CD4-positive, alpha-beta T cell (primary cell): ENCODE measurements at regions of chr1 and their contacts with region 1.

Region 1: GRCh38 chr1:183915625-183916510 is 110.9 kb downstream of the RGL1 start:
- DNase-seq: peak; percentile 43 to 90 (median 60)
- ATAC-seq: peak; percentile 94
- H3K4me3 ChIP-seq: no peak overlapping the region
- H3K4me3 Mint-ChIP-seq: no peak overlapping the region
- H3K27ac ChIP-seq: no peak overlapping the region
- H3K27ac Mint-ChIP-seq: no peak overlapping the region
- H3K4me1 ChIP-seq: peaks cover 9% of the 10 kb centered on the region
- H3K4me1 Mint-ChIP-seq: peaks cover 11% of the 10 kb centered on the region
- H3K27me3 ChIP-seq: no peaks in the 10 kb centered on the region
- H3K27me3 Mint-ChIP-seq: no peaks in the 10 kb centered on the region
- CTCF ChIP-seq: peak; percentile 85

Region 2: GRCh38 chr1:183281553-183282091 is 634.2 kb before region 1 on chr1:
- CTCF ChIA-PET with region 1: no interaction called
- POLR2A ChIA-PET with region 1: no interaction called
- intact Hi-C with region 1: loop called in 1 of 2 experiments (anchors 5 kb)
- DNase-seq: peak; percentile 41 to 76 (median 58)
- ATAC-seq: peak; percentile 71
- H3K4me3 ChIP-seq: no peak overlapping the region
- H3K4me3 Mint-ChIP-seq: no peak overlapping the region
- H3K27ac ChIP-seq: no peak overlapping the region
- H3K27ac Mint-ChIP-seq: no peak overlapping the region
- H3K4me1 ChIP-seq: peaks cover 5% of the 10 kb centered on the region
- H3K4me1 Mint-ChIP-seq: no peaks in the 10 kb centered on the region
- H3K27me3 ChIP-seq: no peaks in the 10 kb centered on the region
- H3K27me3 Mint-ChIP-seq: peaks cover 16% of the 10 kb centered on the region
- CTCF ChIP-seq: peak; percentile 80

Region 3: DNA sequence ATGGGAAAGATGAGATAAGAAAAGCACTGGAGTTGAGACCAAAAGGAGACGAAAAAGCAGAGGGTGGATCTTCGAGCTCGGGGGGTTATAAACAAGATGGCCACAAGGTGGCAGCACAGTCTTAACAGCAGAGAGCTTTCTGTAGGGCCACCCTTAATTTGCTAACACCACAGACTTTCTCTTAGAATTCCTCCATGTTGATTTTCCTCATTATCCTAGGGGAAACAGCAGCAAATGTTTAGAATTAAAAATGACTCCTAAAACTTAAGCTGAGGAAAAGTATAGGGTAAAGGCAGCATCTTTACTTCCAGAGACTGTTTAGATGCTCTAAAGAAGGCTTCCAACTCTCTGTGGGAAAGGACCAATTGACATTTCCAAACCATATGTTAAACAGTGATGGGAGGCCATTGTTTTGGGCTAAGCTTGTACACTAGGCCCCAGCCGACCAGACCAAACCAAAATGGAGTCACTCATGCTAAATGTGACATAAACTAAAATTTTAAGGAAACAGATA is 260.2 kb before region 1 on chr1:
- CTCF ChIA-PET with region 1: interaction called, 57 read pairs
- POLR2A ChIA-PET with region 1: interaction called, 15 read pairs
- intact Hi-C with region 1: loop called (anchors 1 kb)
- DNase-seq: peak; percentile 50 to 87 (median 70)
- ATAC-seq: peak; percentile 70
- H3K4me3 ChIP-seq: no peak overlapping the region
- H3K4me3 Mint-ChIP-seq: no peak overlapping the region
- H3K27ac ChIP-seq: no peak overlapping the region
- H3K27ac Mint-ChIP-seq: no peak overlapping the region
- H3K4me1 ChIP-seq: peaks cover 28% of the 10 kb centered on the region
- H3K4me1 Mint-ChIP-seq: peaks cover 40% of the 10 kb centered on the region
- H3K27me3 ChIP-seq: no peaks in the 10 kb centered on the region
- H3K27me3 Mint-ChIP-seq: no peaks in the 10 kb centered on the region
- CTCF ChIP-seq: peak; percentile 85

Region 4: DNA sequence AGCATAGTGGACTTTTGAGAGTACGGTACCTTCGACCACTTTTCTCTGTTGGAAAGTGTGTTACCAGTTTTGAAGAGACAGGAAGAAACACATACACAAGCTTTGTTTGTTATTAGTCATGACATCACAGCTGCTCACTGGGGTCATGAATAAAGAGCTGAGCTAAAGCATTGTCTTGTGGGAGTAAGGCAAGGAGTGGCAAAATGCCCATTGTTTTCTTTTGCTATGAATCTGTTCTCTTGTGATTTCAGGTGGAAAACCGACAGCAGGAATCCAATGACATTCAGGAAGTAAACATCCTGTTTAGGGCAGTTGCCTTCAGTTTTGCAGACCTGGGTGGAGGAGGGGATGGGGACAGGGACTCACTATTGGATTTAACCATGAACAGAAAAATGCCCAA is 44.7 kb before region 1 on chr1:
- CTCF ChIA-PET with region 1: no interaction called
- POLR2A ChIA-PET with region 1: no interaction called
- intact Hi-C with region 1: no loop called
- DNase-seq: no peak
- ATAC-seq: no peak
- H3K4me3 ChIP-seq: no peak overlapping the region
- H3K4me3 Mint-ChIP-seq: no peak overlapping the region
- H3K27ac ChIP-seq: no peak overlapping the region
- H3K27ac Mint-ChIP-seq: no peak overlapping the region
- H3K4me1 ChIP-seq: peaks cover 3% of the 10 kb centered on the region
- H3K4me1 Mint-ChIP-seq: peaks cover 22% of the 10 kb centered on the region
- H3K27me3 ChIP-seq: no peaks in the 10 kb centered on the region
- H3K27me3 Mint-ChIP-seq: no peaks in the 10 kb centered on the region
- CTCF ChIP-seq: no peak

Region 5: DNA sequence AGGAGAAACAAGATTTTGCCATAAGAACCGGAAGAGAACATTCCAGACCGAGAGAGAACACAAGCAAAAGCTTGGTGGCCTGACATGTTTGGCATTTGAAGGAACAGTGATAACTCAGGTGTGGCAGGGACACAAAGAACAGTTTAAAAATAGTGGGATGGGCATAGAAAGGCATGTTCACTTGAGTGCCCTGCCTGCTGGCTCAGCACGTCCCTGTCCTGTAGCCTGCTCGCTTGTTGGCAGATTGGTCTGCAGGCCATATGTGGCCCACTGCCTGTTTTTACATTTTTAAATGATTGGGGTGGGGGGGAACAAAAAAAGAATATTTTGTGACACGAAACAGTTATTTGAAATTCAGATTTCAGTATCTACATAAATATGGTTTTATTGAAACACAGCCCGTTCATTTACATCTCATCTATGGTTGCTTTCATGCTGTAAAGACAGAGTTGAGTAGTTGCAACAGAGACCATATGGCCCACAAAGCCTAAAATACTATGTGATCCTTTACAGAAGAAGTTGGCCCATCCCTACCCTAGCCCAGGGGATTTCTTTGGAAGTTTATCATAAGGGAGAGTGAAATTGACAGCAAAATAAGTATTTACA is 10.3 kb before region 1 on chr1:
- CTCF ChIA-PET with region 1: interaction called, 11 read pairs
- POLR2A ChIA-PET with region 1: no interaction called
- intact Hi-C with region 1: no loop called
- DNase-seq: no peak
- ATAC-seq: no peak
- H3K4me3 ChIP-seq: no peak overlapping the region
- H3K4me3 Mint-ChIP-seq: no peak overlapping the region
- H3K27ac ChIP-seq: no peak overlapping the region
- H3K27ac Mint-ChIP-seq: no peak overlapping the region
- H3K4me1 ChIP-seq: no peaks in the 10 kb centered on the region
- H3K4me1 Mint-ChIP-seq: no peaks in the 10 kb centered on the region
- H3K27me3 ChIP-seq: no peaks in the 10 kb centered on the region
- H3K27me3 Mint-ChIP-seq: no peaks in the 10 kb centered on the region
- CTCF ChIP-seq: no peak

Region 6: DNA sequence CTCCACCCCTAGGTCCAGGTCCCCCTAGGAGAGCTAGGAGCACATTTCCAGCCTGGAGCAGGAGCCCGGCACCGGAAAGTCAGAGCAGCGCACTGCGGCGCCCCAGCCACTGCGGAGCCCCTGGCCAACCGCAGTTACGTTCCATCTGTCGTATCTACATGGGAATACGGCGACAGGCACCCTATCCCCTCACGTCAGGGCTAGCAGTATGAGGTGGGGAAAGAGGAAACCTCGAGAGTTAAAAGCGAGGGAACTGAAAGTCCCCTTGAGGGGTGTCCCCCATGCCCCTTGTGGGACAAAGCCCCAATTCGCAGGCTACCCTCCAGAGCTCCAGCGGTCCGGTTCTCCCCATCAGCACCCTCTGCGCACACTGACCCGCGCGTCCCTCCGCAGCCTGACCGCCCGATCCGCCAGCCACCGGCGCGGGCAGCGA is 120.7 kb after region 1 on chr1:
- CTCF ChIA-PET with region 1: no interaction called
- POLR2A ChIA-PET with region 1: no interaction called
- intact Hi-C with region 1: no loop called
- DNase-seq: peak in 6 of 14 experiments; percentile 0 to 44 (median 18)
- ATAC-seq: peak; percentile 25
- H3K4me3 ChIP-seq: peak overlapping the region; percentile 56
- H3K4me3 Mint-ChIP-seq: peak overlapping the region; percentile 79
- H3K27ac ChIP-seq: no peak overlapping the region
- H3K27ac Mint-ChIP-seq: no peak overlapping the region
- H3K4me1 ChIP-seq: peaks cover 19% of the 10 kb centered on the region
- H3K4me1 Mint-ChIP-seq: peaks cover 6% of the 10 kb centered on the region
- H3K27me3 ChIP-seq: peaks cover 26 to 49% of the 10 kb centered on the region in 2 experiments
- H3K27me3 Mint-ChIP-seq: peaks cover 79% of the 10 kb centered on the region
- CTCF ChIP-seq: no peak

Region 7: DNA sequence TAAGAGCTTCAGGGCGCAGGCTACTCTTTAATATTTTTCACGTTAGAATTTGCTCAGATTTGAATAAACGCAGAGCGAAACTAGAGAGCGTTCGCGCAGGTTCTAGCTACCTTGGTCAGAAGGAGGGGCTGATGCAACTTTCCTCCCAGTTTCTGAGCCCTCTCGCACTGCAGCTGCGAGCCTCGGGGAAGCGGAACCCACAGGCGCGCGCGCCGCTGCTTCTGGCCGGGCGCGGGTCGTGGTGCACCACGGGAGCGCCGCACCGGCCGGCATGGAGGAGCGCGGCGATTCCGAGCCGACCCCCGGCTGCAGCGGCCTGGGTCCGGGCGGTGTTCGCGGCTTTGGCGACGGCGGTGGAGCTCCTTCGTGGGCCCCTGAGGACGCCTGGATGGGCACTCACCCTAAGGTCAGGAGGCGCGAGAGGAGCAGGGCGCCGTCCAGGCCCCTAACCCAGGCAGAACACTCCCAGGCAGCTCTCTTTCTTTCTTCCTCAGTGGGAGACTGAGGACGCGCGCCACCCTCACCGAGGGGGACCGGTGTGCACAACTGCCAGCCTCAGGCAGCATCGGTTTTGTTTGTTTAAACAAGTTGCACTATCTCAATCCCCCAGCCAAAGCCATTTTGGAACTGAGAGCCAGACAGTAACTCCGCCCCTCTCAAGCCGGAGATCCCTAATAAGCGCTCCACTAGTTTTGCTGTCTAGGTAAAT is 135.8 kb after region 1 on chr1 and contains the start of gene TSEN15:
- CTCF ChIA-PET with region 1: interaction called, 7 read pairs
- POLR2A ChIA-PET with region 1: interaction called, 5 read pairs
- intact Hi-C with region 1: loop called in 1 of 2 experiments (anchors 5 kb)
- DNase-seq: peak; percentile 50 to 87 (median 70)
- ATAC-seq: peak; percentile 96
- H3K4me3 ChIP-seq: peak within 1 kb of the TSS; percentile 87
- H3K4me3 Mint-ChIP-seq: peak within 1 kb of the TSS; percentile 98
- H3K27ac ChIP-seq: peak within 1 kb of the TSS; percentile 33 to 80
- H3K27ac Mint-ChIP-seq: peak within 1 kb of the TSS; percentile 92
- H3K4me1 ChIP-seq: peaks cover 15% of the 10 kb centered on the region
- H3K4me1 Mint-ChIP-seq: peaks cover 43% of the 10 kb centered on the region
- H3K27me3 ChIP-seq: no peaks in the 10 kb centered on the region
- H3K27me3 Mint-ChIP-seq: peaks cover 15% of the 10 kb centered on the region
- CTCF ChIP-seq: no peak
- total RNA-seq, gene TSEN15: 11.2 to 12.2 TPM